Spleen (tissue), 13 donors: ENCODE measurements at regions of chr5 and their contacts with region 1.

Region 1: DNA sequence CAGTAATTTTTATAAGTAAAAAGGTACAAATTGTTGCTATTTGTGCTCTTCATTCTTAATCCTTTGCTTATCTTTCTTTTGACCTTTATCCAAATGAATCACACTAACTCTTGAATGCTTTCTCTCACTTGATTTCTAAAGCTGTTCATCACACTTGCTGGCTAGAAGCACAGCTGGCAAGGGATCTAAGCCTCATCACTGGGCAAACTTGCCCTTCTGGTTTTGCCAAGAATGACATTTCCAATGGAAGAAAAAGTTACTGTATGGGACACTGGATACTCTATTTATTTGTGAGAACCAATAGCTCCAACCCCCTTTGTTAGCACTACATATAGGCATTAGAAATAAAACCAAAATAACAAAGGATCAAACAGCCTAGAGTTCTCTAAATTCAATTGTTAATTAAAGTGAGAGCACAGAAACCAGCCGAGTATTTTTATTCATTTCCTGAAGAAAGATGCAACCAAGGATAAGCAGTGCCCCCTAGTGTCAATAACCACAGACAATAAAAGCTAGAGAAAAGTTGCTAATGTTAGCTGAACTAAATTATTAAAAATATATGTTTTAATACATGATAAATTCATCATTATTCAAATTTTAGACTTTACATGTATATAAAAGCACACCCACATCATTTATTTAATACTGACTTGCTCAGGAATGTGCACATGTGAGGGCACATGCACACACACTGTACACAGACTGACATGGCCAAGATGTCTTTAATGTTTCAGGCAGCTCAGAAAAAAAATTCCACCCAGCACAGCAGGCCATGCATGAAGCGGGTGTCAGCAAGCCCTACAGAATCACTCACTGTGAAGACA is 59.8 kb upstream of the POU5F2 start:
- DNase-seq: no peak
- H3K4me3 ChIP-seq: no peak overlapping the region
- H3K27ac ChIP-seq: no peak overlapping the region
- H3K4me1 ChIP-seq: peaks cover 0 to 7% (median 0%) of the 10 kb centered on the region in 6 donors
- H3K27me3 ChIP-seq: no peaks in the 10 kb centered on the region
- CTCF ChIP-seq: peak in 10 of 11 experiments; percentile 9 to 63 (median 50)
- POLR2A ChIP-seq: no peak

Region 2: DNA sequence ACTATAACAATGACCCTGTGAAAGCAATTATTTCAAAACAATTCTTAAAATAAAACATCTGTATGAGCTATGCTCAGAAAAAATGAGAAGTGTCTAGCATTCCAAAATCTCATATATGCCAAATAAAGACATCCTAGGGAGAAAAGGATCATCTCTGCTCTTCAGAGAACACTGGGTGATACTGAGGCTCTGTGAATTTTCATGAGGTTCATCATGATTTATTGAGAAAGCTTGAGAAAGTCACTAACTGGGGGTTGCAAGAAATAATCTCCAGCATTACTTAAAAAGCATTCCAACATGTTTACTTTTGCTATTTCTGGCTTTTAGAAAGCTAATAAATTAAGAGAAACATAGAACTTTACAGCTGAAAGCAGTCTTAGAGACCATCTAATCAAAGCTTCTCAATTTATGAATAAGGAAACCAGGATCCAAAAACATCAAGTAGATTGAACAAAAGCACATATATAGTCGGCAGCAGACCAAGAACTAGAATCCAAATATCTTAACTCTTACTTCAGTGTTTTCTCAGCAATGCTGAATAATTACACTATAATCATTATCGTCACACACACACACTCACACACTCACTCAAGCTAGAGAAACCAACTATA is 593.0 kb before region 1 on chr5:
- intact Hi-C with region 1: no loop called
- DNase-seq: no peak
- H3K4me3 ChIP-seq: no peak overlapping the region
- H3K27ac ChIP-seq: peak overlapping the region in 3 of 8 donors; percentile 9 to 34 (median 16)
- H3K4me1 ChIP-seq: no peaks in the 10 kb centered on the region
- H3K27me3 ChIP-seq: no peaks in the 10 kb centered on the region
- CTCF ChIP-seq: no peak
- POLR2A ChIP-seq: no peak

Region 3: DNA sequence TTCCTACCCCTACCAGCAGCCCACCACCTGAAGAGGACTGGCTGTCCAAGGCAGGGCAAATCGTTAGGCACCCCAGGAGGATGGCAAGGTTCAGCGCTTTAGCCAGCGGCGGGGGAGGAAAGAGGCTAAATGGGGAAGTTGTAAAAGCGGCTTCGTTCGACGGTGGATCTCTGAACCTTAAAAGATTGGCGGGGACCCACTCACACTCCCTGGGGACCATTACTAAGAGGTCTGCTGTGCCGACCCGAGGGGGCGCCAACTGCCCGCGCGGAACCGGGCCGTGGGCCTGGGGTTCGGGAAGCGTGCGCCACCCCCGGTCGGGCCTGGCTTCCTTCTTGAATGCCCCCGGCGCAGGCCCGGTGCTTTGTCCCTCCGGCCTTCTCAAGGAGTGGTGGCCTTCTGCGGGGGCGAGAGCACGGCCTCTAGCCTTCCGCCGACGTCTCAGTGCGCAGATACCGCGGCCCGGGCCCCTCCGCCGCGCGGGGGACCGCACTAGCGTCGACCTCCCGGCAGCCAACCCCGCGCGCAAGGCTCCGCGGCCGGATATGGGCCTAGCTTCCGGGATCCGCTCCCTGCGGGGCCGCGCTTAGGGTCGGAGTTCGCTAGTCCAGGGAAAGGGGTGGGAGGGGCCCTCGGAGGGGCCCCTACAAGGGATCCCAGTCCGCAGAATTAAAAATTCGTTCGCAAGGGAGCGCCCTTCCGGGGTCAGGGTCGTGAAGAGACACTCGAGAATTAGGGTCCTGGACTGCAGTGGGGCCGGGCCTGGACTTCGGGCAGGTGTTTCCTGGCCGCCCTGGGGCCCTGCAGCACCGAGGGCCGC is 230.7 kb before region 1 on chr5:
- intact Hi-C with region 1: no loop called
- DNase-seq: peak; percentile 76
- H3K4me3 ChIP-seq: peak overlapping the region in 7 of 8 donors; percentile 18 to 60 (median 28)
- H3K27ac ChIP-seq: no peak overlapping the region
- H3K4me1 ChIP-seq: peaks cover 4 to 37% (median 29%) of the 10 kb centered on the region in 6 donors
- H3K27me3 ChIP-seq: peaks cover 0 to 88% (median 56%) of the 10 kb centered on the region in 7 donors
- CTCF ChIP-seq: no peak
- POLR2A ChIP-seq: no peak

Region 4: GRCh38 chr5:93607367-93608258 is 193.6 kb before region 1 on chr5:
- intact Hi-C with region 1: loop called (anchors 10 kb)
- DNase-seq: no peak
- H3K4me3 ChIP-seq: peak overlapping the region in 2 of 8 donors; percentile 2 to 41
- H3K27ac ChIP-seq: no peak overlapping the region
- H3K4me1 ChIP-seq: peaks cover 5 to 37% (median 25%) of the 10 kb centered on the region in 6 donors
- H3K27me3 ChIP-seq: peaks cover 10 to 100% (median 92%) of the 10 kb centered on the region in 7 donors
- CTCF ChIP-seq: peak in 4 of 11 experiments; percentile 22 to 32 (median 32)
- POLR2A ChIP-seq: no peak